Activated CD4-positive, alpha-beta memory T cell treated with anti-CD3 and anti-CD28 coated beads for 36 hours (primary cell): ENCODE measurements at regions of chr5 and their contacts with region 1.

Region 1: GRCh38 chr5:143824851-143825720 is 13.1 kb downstream of the HMHB1 start:
- DNase-seq: peak; percentile 89
- H3K4me3 Mint-ChIP-seq: no peak overlapping the region
- H3K27ac Mint-ChIP-seq: no peak overlapping the region
- H3K4me1 Mint-ChIP-seq: peaks cover 22% of the 10 kb centered on the region
- H3K27me3 Mint-ChIP-seq: peaks cover 3% of the 10 kb centered on the region

Region 2: GRCh38 chr5:142922223-142922952 is 902.7 kb before region 1 on chr5:
- CTCF ChIA-PET with region 1: interaction called, 7 read pairs
- POLR2A ChIA-PET with region 1: no interaction called
- intact Hi-C with region 1: loop called (anchors 1 kb)
- DNase-seq: no peak
- H3K4me3 Mint-ChIP-seq: no peak overlapping the region
- H3K27ac Mint-ChIP-seq: no peak overlapping the region
- H3K4me1 Mint-ChIP-seq: peaks cover 28% of the 10 kb centered on the region
- H3K27me3 Mint-ChIP-seq: no peaks in the 10 kb centered on the region

Region 3: DNA sequence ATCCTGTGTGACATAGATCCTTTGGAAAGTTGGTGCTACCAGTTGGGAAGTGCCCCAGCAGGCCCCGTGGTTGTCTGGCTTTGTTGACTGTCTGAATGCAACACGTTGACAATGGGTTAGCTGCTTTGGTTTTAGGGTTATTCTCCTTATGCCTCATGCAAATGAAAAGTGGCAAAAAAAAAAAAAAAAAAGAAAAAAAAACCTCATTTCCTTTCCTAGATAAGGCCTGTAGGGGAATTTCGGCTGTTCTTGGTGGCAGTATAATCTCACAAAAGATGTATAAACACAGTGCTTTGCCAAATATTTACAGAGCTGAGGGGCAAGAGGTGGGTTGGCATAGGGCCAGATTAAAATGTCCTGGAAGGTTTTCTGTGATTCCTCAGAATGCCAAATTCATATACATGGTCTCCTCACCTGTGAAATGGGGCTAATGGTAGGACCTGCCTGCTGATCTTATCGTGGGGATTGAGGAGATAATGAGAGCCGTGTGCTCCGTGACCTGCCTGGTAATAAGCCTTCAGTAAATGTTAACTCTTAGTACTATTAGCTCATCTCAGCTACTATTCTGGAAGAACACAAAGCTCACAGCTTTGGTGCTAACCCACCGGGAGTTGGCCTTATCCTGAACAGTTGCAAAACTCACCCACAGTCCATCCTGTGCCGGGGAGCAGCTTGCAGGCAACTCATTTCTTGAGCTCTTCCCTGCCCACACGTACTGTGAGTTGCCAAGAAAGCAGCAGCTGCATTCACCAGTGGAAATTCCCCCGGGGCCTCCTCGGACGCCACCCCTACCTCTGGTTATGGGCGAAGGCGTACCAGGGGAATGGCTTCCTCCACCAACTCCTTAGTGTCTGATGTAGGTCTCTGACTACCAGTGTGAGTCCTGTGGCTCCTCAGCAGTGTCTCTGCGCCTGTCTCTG is 641.9 kb before region 1 on chr5:
- CTCF ChIA-PET with region 1: no interaction called
- POLR2A ChIA-PET with region 1: no interaction called
- intact Hi-C with region 1: loop called (anchors 5 kb)
- DNase-seq: peak; percentile 89
- H3K4me3 Mint-ChIP-seq: peak overlapping the region; percentile 57
- H3K27ac Mint-ChIP-seq: peak overlapping the region; percentile 90
- H3K4me1 Mint-ChIP-seq: peaks cover 56% of the 10 kb centered on the region
- H3K27me3 Mint-ChIP-seq: no peaks in the 10 kb centered on the region

Region 4: GRCh38 chr5:143435210-143435657 is 389.9 kb before region 1 on chr5:
- CTCF ChIA-PET with region 1: interaction called, 6 read pairs
- POLR2A ChIA-PET with region 1: no interaction called
- intact Hi-C with region 1: loop called (anchors 5 kb)
- DNase-seq: peak; percentile 51
- H3K4me3 Mint-ChIP-seq: peak overlapping the region; percentile 81
- H3K27ac Mint-ChIP-seq: peak overlapping the region; percentile 87
- H3K4me1 Mint-ChIP-seq: peaks cover 68% of the 10 kb centered on the region
- H3K27me3 Mint-ChIP-seq: no peaks in the 10 kb centered on the region

Region 5: DNA sequence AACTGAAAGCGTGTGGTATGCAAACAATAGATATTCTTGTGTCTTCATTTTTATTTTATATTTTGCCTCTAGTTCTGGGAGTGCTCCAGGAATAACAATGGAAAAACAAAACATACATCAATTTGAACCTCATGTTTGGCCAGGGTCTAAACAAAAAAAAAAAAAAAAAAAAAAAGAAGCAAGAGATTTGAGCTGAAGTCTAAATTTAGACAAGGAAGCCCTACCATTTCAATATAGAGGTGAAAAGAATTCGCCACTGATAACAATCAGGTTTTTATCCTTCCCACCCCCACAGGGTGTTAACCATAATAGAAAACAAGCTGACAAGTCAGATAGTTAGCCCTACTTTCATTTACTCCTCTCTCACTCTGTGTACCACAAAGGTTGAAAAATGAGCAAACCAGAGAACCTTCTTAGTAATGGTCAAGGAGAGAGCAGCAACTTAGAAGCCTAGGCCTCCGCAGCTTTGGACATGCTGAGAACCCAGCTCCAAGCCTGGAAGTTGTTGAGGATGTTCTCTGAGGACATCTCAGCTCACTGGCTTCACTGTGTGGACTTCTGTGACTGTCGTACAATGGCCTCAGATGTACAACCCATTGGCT is 131.3 kb before region 1 on chr5:
- CTCF ChIA-PET with region 1: interaction called, 3 read pairs
- POLR2A ChIA-PET with region 1: no interaction called
- intact Hi-C with region 1: loop called (anchors 5 kb)
- DNase-seq: peak; percentile 22
- H3K4me3 Mint-ChIP-seq: no peak overlapping the region
- H3K27ac Mint-ChIP-seq: no peak overlapping the region
- H3K4me1 Mint-ChIP-seq: peaks cover 21% of the 10 kb centered on the region
- H3K27me3 Mint-ChIP-seq: peaks cover 4% of the 10 kb centered on the region

Region 6: DNA sequence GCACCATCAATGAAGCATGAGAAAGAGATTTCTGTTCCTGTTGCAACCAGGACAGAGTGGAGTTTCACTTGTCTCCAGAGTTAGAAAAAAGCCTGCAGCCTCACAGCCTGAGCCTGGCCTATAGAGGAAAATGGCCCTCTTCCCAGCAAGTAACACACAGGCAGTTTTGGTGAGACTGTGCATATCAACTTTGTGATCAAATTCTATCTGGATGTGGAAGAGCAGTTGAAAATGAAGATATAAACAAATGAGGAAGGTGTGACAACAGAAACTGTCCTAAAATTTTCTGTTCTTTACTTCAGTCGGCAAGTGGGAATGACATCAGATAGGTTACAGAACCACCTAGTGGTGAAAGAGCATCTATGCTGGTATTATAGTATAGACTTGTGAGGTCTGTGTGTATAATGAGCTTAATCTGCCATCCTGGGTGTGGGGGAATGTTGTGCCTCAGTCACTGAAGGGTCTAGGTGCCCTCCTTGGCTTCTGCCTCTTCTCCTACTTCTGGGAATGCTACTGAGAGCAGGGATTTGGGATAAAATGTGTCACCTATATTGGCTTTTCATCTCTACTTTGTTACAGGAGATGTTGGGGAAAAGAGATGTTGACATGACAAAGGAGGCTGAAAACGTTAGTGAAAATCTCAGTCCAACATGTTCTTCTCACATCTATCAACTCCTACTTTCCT is 317.2 kb after region 1 on chr5:
- CTCF ChIA-PET with region 1: no interaction called
- POLR2A ChIA-PET with region 1: no interaction called
- intact Hi-C with region 1: loop called (anchors 1 kb)
- DNase-seq: no peak
- H3K4me3 Mint-ChIP-seq: no peak overlapping the region
- H3K27ac Mint-ChIP-seq: no peak overlapping the region
- H3K4me1 Mint-ChIP-seq: peaks cover 3% of the 10 kb centered on the region
- H3K27me3 Mint-ChIP-seq: peaks cover 4% of the 10 kb centered on the region